CD8-positive, alpha-beta T cell (primary cell): ENCODE measurements at regions of chr14 and their contacts with region 1.

Region 1: GRCh38 chr14:99245564-99246511 is 26.2 kb downstream of the BCL11B start:
- DNase-seq: peak in 3 of 9 experiments; percentile 45 to 58 (median 50)
- ATAC-seq: no peak
- H3K4me3 ChIP-seq: peak overlapping the region; percentile 37 to 38
- H3K4me3 Mint-ChIP-seq: peak overlapping the region; percentile 85
- H3K27ac ChIP-seq: peak overlapping the region; percentile 79 to 96
- H3K27ac Mint-ChIP-seq: peak overlapping the region; percentile 99
- H3K4me1 ChIP-seq: peaks cover 85% of the 10 kb centered on the region
- H3K4me1 Mint-ChIP-seq: peaks cover 87% of the 10 kb centered on the region
- H3K27me3 ChIP-seq: no peaks in the 10 kb centered on the region
- H3K27me3 Mint-ChIP-seq: no peaks in the 10 kb centered on the region
- CTCF ChIP-seq: no peak

Region 2: GRCh38 chr14:98826618-98827017 is 419.2 kb before region 1 on chr14:
- CTCF ChIA-PET with region 1: no interaction called
- POLR2A ChIA-PET with region 1: no interaction called
- intact Hi-C with region 1: no loop called
- DNase-seq: peak in 2 of 9 experiments; percentile 15 to 36
- ATAC-seq: no peak
- H3K4me3 ChIP-seq: no peak overlapping the region
- H3K4me3 Mint-ChIP-seq: no peak overlapping the region
- H3K27ac ChIP-seq: no peak overlapping the region
- H3K27ac Mint-ChIP-seq: no peak overlapping the region
- H3K4me1 ChIP-seq: peaks cover 13% of the 10 kb centered on the region
- H3K4me1 Mint-ChIP-seq: peaks cover 17% of the 10 kb centered on the region
- H3K27me3 ChIP-seq: no peaks in the 10 kb centered on the region
- H3K27me3 Mint-ChIP-seq: no peaks in the 10 kb centered on the region
- CTCF ChIP-seq: no peak

Region 3: GRCh38 chr14:99224116-99224910 is 21.5 kb before region 1 on chr14:
- CTCF ChIA-PET with region 1: interaction called, 6 read pairs
- POLR2A ChIA-PET with region 1: interaction called, 2,179 read pairs
- intact Hi-C with region 1: loop called in 1 of 2 experiments (anchors 2 kb)
- DNase-seq: peak in 1 of 9 experiments; percentile 60
- ATAC-seq: peak; percentile 9
- H3K4me3 ChIP-seq: peak overlapping the region in 1 of 2 experiments; percentile 3
- H3K4me3 Mint-ChIP-seq: peak overlapping the region; percentile 54
- H3K27ac ChIP-seq: peak overlapping the region; percentile 6 to 96
- H3K27ac Mint-ChIP-seq: peak overlapping the region; percentile 99
- H3K4me1 ChIP-seq: peaks cover 95% of the 10 kb centered on the region
- H3K4me1 Mint-ChIP-seq: peaks cover 92% of the 10 kb centered on the region
- H3K27me3 ChIP-seq: no peaks in the 10 kb centered on the region
- H3K27me3 Mint-ChIP-seq: no peaks in the 10 kb centered on the region
- CTCF ChIP-seq: no peak

Region 4: DNA sequence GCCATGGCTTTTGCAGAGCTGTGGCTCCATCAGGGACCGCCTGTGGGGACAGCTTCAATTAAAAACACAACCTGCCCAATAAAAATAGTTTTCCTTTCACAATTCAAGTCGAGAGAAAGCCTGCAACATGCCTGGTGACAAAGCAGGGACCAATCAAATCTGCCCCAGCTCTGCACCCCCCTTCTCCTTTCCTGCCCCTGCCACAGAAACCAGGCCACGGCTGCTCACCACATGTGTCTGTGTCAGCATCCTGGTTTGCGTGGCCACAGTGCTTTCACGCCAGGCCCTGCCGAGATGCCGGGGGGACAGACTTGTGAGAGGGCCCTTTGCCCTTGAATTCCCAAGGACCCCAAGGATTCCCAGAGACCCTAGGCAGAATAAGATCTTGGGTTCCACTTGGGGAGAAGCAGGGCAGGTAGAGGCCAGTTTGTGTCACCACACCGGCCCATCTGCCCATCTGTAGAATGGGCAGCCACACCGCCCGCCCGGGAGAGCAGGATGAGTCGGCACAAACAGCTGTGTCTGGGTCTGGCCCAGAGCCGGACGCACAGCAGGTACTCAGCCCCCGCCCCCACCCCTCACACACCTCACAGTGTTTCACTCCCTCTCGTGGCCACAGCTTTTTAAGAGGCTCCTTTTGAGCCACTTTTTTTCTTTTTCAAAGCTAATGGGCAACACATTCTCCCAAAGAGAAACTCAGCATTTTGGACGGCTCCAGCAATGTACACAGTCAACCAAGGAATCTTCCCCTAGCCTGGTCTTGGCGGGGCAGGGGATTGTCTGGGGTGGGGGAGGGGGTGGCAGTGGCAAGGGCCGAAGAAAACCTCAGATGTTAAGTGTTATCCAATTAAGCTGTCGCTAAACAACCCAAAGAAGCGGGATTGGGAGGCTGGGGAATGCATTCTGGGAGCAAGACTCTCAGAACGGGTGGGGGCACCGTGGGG is 15.4 kb before region 1 on chr14:
- CTCF ChIA-PET with region 1: interaction called, 35 read pairs
- POLR2A ChIA-PET with region 1: interaction called, 2,179 read pairs
- intact Hi-C with region 1: loop called in 1 of 2 experiments (anchors 1 kb)
- DNase-seq: peak; percentile 73 to 95 (median 85)
- ATAC-seq: peak; percentile 62
- H3K4me3 ChIP-seq: peak overlapping the region; percentile 16 to 23
- H3K4me3 Mint-ChIP-seq: peak overlapping the region; percentile 75
- H3K27ac ChIP-seq: peak overlapping the region; percentile 60 to 96
- H3K27ac Mint-ChIP-seq: peak overlapping the region; percentile 99
- H3K4me1 ChIP-seq: peaks cover 99% of the 10 kb centered on the region
- H3K4me1 Mint-ChIP-seq: peaks cover 95% of the 10 kb centered on the region
- H3K27me3 ChIP-seq: no peaks in the 10 kb centered on the region
- H3K27me3 Mint-ChIP-seq: no peaks in the 10 kb centered on the region
- CTCF ChIP-seq: peak; percentile 46

Region 5: GRCh38 chr14:99260587-99261551 is 15.0 kb after region 1 on chr14:
- CTCF ChIA-PET with region 1: interaction called, 284 read pairs
- POLR2A ChIA-PET with region 1: interaction called, 2,179 read pairs
- intact Hi-C with region 1: loop called (anchors 1 to 2 kb)
- DNase-seq: peak in 7 of 9 experiments; percentile 57 to 90 (median 79)
- ATAC-seq: peak; percentile 21
- H3K4me3 ChIP-seq: peak overlapping the region; percentile 45 to 46
- H3K4me3 Mint-ChIP-seq: peak overlapping the region; percentile 100
- H3K27ac ChIP-seq: peak overlapping the region; percentile 96 to 97
- H3K27ac Mint-ChIP-seq: peak overlapping the region; percentile 100
- H3K4me1 ChIP-seq: peaks cover 90% of the 10 kb centered on the region
- H3K4me1 Mint-ChIP-seq: peaks cover 97% of the 10 kb centered on the region
- H3K27me3 ChIP-seq: no peaks in the 10 kb centered on the region
- H3K27me3 Mint-ChIP-seq: no peaks in the 10 kb centered on the region
- CTCF ChIP-seq: no peak